OCI-LY7 (cell line): ENCODE measurements at regions of chr10 and their contacts with region 1.

Region 1: GRCh38 chr10:23158370-23158769 is 33.7 kb upstream of the PTF1A start:
- DNase-seq: peak; percentile 62
- H3K4me3 ChIP-seq: no peak overlapping the region
- H3K27ac ChIP-seq: no peak overlapping the region
- H3K4me1 ChIP-seq: no peaks in the 10 kb centered on the region
- CTCF ChIP-seq: peak; percentile 97

Region 2: DNA sequence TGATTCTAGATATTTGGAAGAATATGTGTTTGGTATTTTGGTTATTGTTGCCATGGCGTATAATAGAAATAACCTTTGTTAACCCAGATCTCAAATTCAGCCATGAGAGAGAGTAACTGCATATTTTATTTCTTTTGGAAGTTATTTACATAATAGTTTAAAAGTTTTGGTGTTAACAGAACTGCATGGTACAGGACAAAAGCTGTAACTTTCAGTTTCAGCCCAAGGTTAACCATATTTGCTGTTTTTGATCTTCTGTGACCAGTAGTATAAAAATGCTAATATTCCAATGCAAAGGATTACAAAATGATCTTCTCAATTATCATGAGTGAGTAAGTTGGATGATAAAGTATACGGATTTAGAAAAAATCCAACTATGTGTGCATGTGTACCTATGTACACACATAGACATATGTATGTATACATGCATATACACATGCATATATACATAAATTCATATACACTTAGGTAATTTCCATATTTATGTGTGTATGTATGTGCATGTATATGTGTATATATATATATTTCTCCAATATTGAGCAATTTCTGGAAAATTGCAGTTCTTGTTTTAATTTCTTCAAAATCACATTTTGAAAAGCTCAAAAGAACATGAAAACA is 406.0 kb before region 1 on chr10:
- CTCF ChIA-PET with region 1: no interaction called
- POLR2A ChIA-PET with region 1: no interaction called
- intact Hi-C with region 1: no loop called
- DNase-seq: no peak
- H3K4me3 ChIP-seq: no peak overlapping the region
- H3K27ac ChIP-seq: no peak overlapping the region
- H3K4me1 ChIP-seq: no peaks in the 10 kb centered on the region
- CTCF ChIP-seq: no peak

Region 3: GRCh38 chr10:23293145-23293724 is 134.9 kb after region 1 on chr10:
- CTCF ChIA-PET with region 1: no interaction called
- POLR2A ChIA-PET with region 1: no interaction called
- intact Hi-C with region 1: loop called (anchors 1 kb)
- DNase-seq: peak; percentile 50
- H3K4me3 ChIP-seq: no peak overlapping the region
- H3K27ac ChIP-seq: no peak overlapping the region
- H3K4me1 ChIP-seq: no peaks in the 10 kb centered on the region
- CTCF ChIP-seq: peak; percentile 75

Region 4: GRCh38 chr10:23525406-23525805 is 367.0 kb after region 1 on chr10:
- CTCF ChIA-PET with region 1: no interaction called
- POLR2A ChIA-PET with region 1: no interaction called
- intact Hi-C with region 1: loop called (anchors 5 kb)
- DNase-seq: peak; percentile 22
- H3K4me3 ChIP-seq: no peak overlapping the region
- H3K27ac ChIP-seq: no peak overlapping the region
- H3K4me1 ChIP-seq: peaks cover 14% of the 10 kb centered on the region
- CTCF ChIP-seq: peak; percentile 70

Region 5: GRCh38 chr10:23702977-23703414 is 544.6 kb after region 1 on chr10:
- CTCF ChIA-PET with region 1: no interaction called
- POLR2A ChIA-PET with region 1: no interaction called
- intact Hi-C with region 1: loop called (anchors 2 kb)
- DNase-seq: peak; percentile 72
- H3K4me3 ChIP-seq: no peak overlapping the region
- H3K27ac ChIP-seq: no peak overlapping the region
- H3K4me1 ChIP-seq: no peaks in the 10 kb centered on the region
- CTCF ChIP-seq: peak; percentile 79

Region 6: GRCh38 chr10:24197263-24197662 is 1038.9 kb after region 1 on chr10:
- CTCF ChIA-PET with region 1: no interaction called
- POLR2A ChIA-PET with region 1: no interaction called
- intact Hi-C with region 1: loop called (anchors 2 kb)
- DNase-seq: no peak
- H3K4me3 ChIP-seq: no peak overlapping the region
- H3K27ac ChIP-seq: no peak overlapping the region
- H3K4me1 ChIP-seq: no peaks in the 10 kb centered on the region
- CTCF ChIP-seq: no peak